ENCODE measurements at regions of chr12 and their contacts with region 1.

Region 1: GRCh38 chr12:38316391-38317129 is at the start of gene ALG10B:
- DNase-seq: peak; percentile 94
- H3K4me3 ChIP-seq: peak within 1 kb of the TSS; percentile 79 to 86
- H3K27ac ChIP-seq: peak within 1 kb of the TSS; percentile 94 to 95
- H3K4me1 ChIP-seq: no peaks in the 10 kb centered on the region
- H3K27me3 ChIP-seq: no peaks in the 10 kb centered on the region
- CTCF ChIP-seq: peak; percentile 42 to 71 (median 63)
- POLR2A ChIP-seq: no peak
- total RNA-seq, gene ALG10B: 11.6 to 66.6 (median 21.9) TPM

Region 2: GRCh38 chr12:38138225-38139221 is 178.0 kb before region 1 on chr12:
- intact Hi-C with region 1: loop called (anchors 10 kb)
- DNase-seq: peak; percentile 59 to 78
- H3K4me3 ChIP-seq: peak overlapping the region; percentile 8 to 29
- H3K27ac ChIP-seq: no peak overlapping the region
- H3K4me1 ChIP-seq: no peaks in the 10 kb centered on the region
- H3K27me3 ChIP-seq: no peaks in the 10 kb centered on the region
- CTCF ChIP-seq: peak; percentile 88 to 94 (median 92)
- POLR2A ChIP-seq: no peak

Region 3: GRCh38 chr12:38269897-38270296 is 46.7 kb before region 1 on chr12:
- intact Hi-C with region 1: no loop called
- DNase-seq: no peak
- H3K4me3 ChIP-seq: no peak overlapping the region
- H3K27ac ChIP-seq: no peak overlapping the region
- H3K4me1 ChIP-seq: no peaks in the 10 kb centered on the region
- H3K27me3 ChIP-seq: no peaks in the 10 kb centered on the region
- CTCF ChIP-seq: no peak
- POLR2A ChIP-seq: no peak

Measured in uterus (tissue), 4 donors.